H1 (cell line): ENCODE measurements at regions of chr11 and their contacts with region 1.

Region 1: DNA sequence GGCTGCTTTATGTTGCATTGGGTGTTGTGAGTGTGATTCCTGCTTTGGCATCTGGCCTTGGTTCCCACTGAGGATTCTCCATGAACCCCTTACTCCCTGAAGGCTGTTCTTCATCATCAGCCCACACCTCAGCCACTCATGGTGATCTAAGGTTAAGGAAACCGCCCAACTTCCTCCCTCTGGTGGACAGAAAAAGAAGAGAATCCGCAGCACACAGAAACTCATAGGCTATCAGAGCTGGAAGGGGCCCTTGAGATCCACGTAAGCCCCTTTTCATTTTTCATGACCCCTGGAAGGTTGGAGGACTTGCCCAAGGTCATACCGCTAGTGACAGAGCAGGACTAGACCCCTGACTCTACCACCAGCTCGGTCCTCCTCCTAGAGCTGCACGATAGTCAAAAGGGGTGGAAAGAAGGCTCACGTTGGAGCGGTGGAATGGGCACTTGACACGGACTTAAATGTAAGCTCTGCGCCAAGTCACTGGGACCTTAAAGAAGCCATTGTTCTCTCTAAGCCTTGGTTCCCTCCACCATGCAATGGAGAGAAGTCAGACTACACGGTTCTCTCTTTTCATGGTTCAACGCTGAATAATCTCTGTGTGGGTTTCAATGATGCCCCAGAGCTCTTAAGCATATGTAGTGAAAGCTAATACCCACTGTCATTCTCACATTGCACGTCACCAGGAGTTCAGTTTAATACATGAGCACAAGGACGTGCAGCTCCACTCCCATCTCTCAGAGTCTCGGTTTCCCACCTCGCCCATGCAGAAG is 83.6 kb upstream of the CRTAM start:
- DNase-seq: peak; percentile 17 to 52
- H3K4me3 ChIP-seq: no peak overlapping the region
- H3K27ac ChIP-seq: no peak overlapping the region
- H3K4me1 ChIP-seq: no peaks in the 10 kb centered on the region
- H3K27me3 ChIP-seq: no peaks in the 10 kb centered on the region
- CTCF ChIP-seq: peak; percentile 28 to 71 (median 66)
- EP300 ChIP-seq: no peak
- POLR2A ChIP-seq: no peak
- RAD21 ChIP-seq: peak; percentile 56 to 72

Region 2: DNA sequence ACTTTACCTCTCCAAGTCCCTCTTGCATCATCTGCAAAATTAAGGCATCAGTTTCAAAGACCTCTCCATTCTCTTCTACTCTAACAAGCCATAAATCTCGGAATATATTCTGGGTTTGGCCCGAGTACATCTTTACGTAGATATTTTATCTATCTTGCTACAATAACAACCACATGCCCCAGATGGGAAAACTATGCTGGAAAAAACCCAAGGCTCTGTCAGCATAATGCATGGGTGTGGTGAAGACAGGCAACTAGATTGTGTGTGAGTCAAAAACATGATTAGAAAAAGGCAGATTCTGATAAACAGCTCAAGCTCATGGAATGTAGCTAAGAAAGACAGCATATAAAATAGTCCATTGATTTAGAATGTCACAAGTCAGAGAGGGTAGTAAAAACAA is 410.5 kb before region 1 on chr11:
- CTCF ChIA-PET with region 1: no interaction called
- POLR2A ChIA-PET with region 1: no interaction called
- DNase-seq: no peak
- H3K4me3 ChIP-seq: no peak overlapping the region
- H3K27ac ChIP-seq: no peak overlapping the region
- H3K4me1 ChIP-seq: no peaks in the 10 kb centered on the region
- H3K27me3 ChIP-seq: no peaks in the 10 kb centered on the region
- CTCF ChIP-seq: no peak
- EP300 ChIP-seq: no peak
- POLR2A ChIP-seq: no peak
- RAD21 ChIP-seq: no peak

Region 3: DNA sequence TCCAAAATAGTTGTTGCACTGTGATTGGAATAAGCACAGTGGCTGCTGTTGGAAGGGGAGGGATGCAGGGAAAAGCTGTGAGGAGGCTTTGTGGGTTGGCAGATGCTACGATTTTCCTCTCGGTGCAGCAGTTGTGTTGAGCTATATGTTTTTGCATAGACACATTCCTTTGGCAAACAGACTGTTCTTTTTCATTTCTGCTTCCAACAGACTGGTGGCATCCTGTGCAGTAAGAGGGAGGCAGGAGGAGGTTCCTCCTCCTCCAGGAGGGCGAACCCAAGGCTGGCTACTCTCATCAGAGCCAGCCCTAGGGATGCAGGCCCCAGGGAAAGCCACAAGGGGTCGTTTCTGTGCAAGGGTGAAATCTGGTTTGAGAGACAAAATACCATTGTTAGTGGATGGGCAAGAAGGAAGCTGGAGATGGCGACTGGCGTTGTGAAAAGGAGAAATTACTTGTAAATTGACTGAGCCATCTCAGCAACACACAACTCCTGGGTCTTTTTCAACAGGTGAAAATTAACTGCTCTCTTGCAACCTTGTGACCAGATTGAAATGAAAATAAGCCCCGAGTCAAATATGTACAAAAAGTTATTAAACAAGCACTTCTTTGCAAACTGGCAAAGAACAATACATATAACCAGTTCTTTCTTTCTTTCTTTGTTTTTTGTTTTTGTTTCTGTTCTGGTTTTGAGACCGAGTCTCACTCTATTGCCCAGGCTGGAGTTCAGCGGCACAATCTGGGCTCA is 125.8 kb before region 1 on chr11:
- CTCF ChIA-PET with region 1: interaction called, 186 read pairs
- POLR2A ChIA-PET with region 1: no interaction called
- DNase-seq: peak; percentile 34 to 86
- H3K4me3 ChIP-seq: no peak overlapping the region
- H3K27ac ChIP-seq: no peak overlapping the region
- H3K4me1 ChIP-seq: no peaks in the 10 kb centered on the region
- H3K27me3 ChIP-seq: no peaks in the 10 kb centered on the region
- CTCF ChIP-seq: peak; percentile 85 to 94 (median 88)
- EP300 ChIP-seq: no peak
- POLR2A ChIP-seq: no peak
- RAD21 ChIP-seq: peak; percentile 81 to 86

Region 4: DNA sequence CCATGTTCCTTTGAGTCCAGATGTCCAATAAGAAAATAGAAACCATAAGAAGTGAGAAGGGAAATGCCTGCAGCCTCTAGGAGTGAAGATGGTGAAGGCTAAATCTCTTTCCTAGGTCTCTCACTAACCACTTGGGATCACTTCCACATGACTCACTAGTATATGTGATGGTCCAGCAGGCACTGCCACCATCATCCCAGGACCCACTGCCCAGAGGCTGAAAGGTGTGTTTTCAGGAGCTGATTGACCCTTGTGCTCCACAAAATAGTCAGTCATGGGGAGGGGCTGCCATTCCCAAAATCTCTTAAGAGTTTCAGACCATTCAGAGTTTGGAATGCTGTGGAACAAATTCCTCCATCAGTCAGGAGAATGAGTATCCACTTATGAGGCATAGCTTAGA is 76.3 kb before region 1 on chr11:
- CTCF ChIA-PET with region 1: interaction called, 12 read pairs
- POLR2A ChIA-PET with region 1: no interaction called
- DNase-seq: no peak
- H3K4me3 ChIP-seq: no peak overlapping the region
- H3K27ac ChIP-seq: no peak overlapping the region
- H3K4me1 ChIP-seq: 0 out of 7 replicates have a peak, but pooled peaks cover 0 to 2% (median 0%) of the 10 kb centered on the region in 4 experiments
- H3K27me3 ChIP-seq: no peaks in the 10 kb centered on the region
- CTCF ChIP-seq: no peak
- EP300 ChIP-seq: no peak
- POLR2A ChIP-seq: no peak
- RAD21 ChIP-seq: no peak

Region 5: DNA sequence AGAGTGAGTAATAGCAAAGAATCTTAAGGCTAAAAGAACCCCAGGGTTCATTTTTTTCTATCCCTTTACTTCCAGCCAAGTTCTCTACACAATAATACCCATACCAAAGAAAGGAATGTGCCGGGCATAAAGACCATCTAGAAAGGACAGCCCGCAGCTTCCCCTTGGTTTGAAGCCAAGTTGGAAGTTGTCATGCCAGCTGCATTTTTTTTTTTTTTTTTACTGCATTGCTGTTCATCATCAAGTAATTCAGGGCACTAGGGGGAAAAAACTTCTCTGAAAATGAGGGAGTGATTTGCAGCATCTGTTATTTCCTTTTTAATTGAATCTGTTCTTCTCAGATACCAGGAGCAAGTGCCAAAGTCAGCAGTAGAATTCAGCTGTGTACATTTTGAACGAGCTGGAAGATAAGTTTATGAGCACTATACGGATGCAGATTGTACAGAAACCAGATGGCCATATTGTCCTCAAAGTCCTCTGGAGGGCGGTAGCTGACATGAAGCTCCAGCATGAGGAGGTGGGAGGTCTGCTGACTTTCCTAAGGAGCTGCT is 42.8 kb before region 1 on chr11:
- CTCF ChIA-PET with region 1: interaction called, 10 read pairs
- POLR2A ChIA-PET with region 1: no interaction called
- DNase-seq: no peak
- H3K4me3 ChIP-seq: no peak overlapping the region
- H3K27ac ChIP-seq: no peak overlapping the region
- H3K4me1 ChIP-seq: no peaks in the 10 kb centered on the region
- H3K27me3 ChIP-seq: no peaks in the 10 kb centered on the region
- CTCF ChIP-seq: peak in 1 of 3 experiments; percentile 21; a peak in 1 of 4 replicates
- EP300 ChIP-seq: no peak
- POLR2A ChIP-seq: no peak
- RAD21 ChIP-seq: peak; percentile 8 to 31; a peak in 2 of 4 replicates

Region 6: GRCh38 chr11:122741613-122742300 is 13.0 kb before region 1 on chr11:
- CTCF ChIA-PET with region 1: interaction called, 40 read pairs
- POLR2A ChIA-PET with region 1: no interaction called
- DNase-seq: no peak
- H3K4me3 ChIP-seq: no peak overlapping the region
- H3K27ac ChIP-seq: no peak overlapping the region
- H3K4me1 ChIP-seq: 0 out of 7 replicates have a peak, but pooled peaks cover 0 to 4% (median 1%) of the 10 kb centered on the region in 4 experiments
- H3K27me3 ChIP-seq: peaks cover 0 to 6% (median 0%) of the 10 kb centered on the region in 4 experiments; a peak in 1 of 7 replicates
- CTCF ChIP-seq: no peak
- EP300 ChIP-seq: no peak
- POLR2A ChIP-seq: no peak
- RAD21 ChIP-seq: no peak

Region 7: DNA sequence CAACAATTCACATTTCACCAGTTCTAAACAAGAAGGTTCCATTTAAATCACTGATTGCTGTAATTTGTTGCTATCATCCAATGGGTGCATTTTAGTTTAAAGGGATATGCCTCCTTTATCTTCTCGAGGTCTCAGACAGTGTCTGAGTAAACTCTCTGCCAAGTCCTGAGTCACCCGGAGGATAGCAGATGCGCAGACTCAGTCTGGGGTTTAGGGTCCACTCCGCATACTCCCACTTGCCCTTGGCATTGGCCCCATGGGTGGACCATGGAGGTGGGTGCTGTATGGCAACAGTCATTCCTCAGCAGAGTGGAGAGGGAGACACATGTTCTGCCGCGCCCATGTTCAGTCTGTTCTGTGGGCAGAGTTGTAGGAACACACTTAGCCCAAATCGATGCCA is 18.2 kb after region 1 on chr11:
- CTCF ChIA-PET with region 1: interaction called, 356 read pairs
- POLR2A ChIA-PET with region 1: no interaction called
- DNase-seq: no peak
- H3K4me3 ChIP-seq: no peak overlapping the region
- H3K27ac ChIP-seq: no peak overlapping the region
- H3K4me1 ChIP-seq: no peaks in the 10 kb centered on the region; a peak in 1 of 7 replicates
- H3K27me3 ChIP-seq: no peaks in the 10 kb centered on the region
- CTCF ChIP-seq: no peak
- EP300 ChIP-seq: no peak
- POLR2A ChIP-seq: no peak
- RAD21 ChIP-seq: no peak

Region 8: GRCh38 chr11:122853971-122854446 is 99.3 kb after region 1 on chr11:
- CTCF ChIA-PET with region 1: interaction called, 11 read pairs
- POLR2A ChIA-PET with region 1: no interaction called
- DNase-seq: peak in 1 of 2 experiments; percentile 53
- H3K4me3 ChIP-seq: no peak overlapping the region
- H3K27ac ChIP-seq: no peak overlapping the region
- H3K4me1 ChIP-seq: peaks cover 0 to 2% (median 0%) of the 10 kb centered on the region in 4 experiments; a peak in 4 of 7 replicates
- H3K27me3 ChIP-seq: no peaks in the 10 kb centered on the region
- CTCF ChIP-seq: peak in 2 of 3 experiments; percentile 59 to 69; a peak in 3 of 4 replicates
- EP300 ChIP-seq: no peak
- POLR2A ChIP-seq: no peak
- RAD21 ChIP-seq: peak; percentile 84 to 85